Natural killer cell (primary cell): ENCODE measurements at regions of chr19 and their contacts with region 1.

Region 1: GRCh38 chr19:52336117-52336790 is at the start of gene ZNF610:
- DNase-seq: peak; percentile 91 to 92
- ATAC-seq: peak; percentile 95 to 99 (median 98)
- H3K4me3 ChIP-seq: peak within 1 kb of the TSS; percentile 93
- H3K4me3 Mint-ChIP-seq: peak within 1 kb of the TSS; percentile 95
- H3K27ac ChIP-seq: peak within 1 kb of the TSS; percentile 84
- H3K27ac Mint-ChIP-seq: peak within 1 kb of the TSS; percentile 89 to 92
- H3K4me1 ChIP-seq: peaks cover 18% of the 10 kb centered on the region
- H3K4me1 Mint-ChIP-seq: peaks cover 13 to 17% of the 10 kb centered on the region in 2 donors
- H3K27me3 ChIP-seq: no peaks in the 10 kb centered on the region
- H3K27me3 Mint-ChIP-seq: no peaks in the 10 kb centered on the region
- CTCF ChIP-seq: no peak
- total RNA-seq, gene ZNF610: 0.68 to 0.86 (median 0.82) TPM

Region 2: GRCh38 chr19:52171321-52172169 is 164.7 kb before region 1 on chr19 and contains the start of gene ZNF836:
- intact Hi-C with region 1: loop called (anchors 5 kb)
- DNase-seq: peak; percentile 79 to 95
- ATAC-seq: peak; percentile 89 to 93 (median 89)
- H3K4me3 ChIP-seq: peak within 1 kb of the TSS; percentile 83
- H3K4me3 Mint-ChIP-seq: peak within 1 kb of the TSS; percentile 99
- H3K27ac ChIP-seq: peak within 1 kb of the TSS; percentile 80
- H3K27ac Mint-ChIP-seq: peak within 1 kb of the TSS; percentile 87 to 97
- H3K4me1 ChIP-seq: peaks cover 45% of the 10 kb centered on the region
- H3K4me1 Mint-ChIP-seq: peaks cover 42 to 45% of the 10 kb centered on the region in 2 donors
- H3K27me3 ChIP-seq: no peaks in the 10 kb centered on the region
- H3K27me3 Mint-ChIP-seq: no peaks in the 10 kb centered on the region
- CTCF ChIP-seq: no peak
- total RNA-seq, gene ZNF836: 27.9 to 40.2 (median 28.0) TPM

Region 3: DNA sequence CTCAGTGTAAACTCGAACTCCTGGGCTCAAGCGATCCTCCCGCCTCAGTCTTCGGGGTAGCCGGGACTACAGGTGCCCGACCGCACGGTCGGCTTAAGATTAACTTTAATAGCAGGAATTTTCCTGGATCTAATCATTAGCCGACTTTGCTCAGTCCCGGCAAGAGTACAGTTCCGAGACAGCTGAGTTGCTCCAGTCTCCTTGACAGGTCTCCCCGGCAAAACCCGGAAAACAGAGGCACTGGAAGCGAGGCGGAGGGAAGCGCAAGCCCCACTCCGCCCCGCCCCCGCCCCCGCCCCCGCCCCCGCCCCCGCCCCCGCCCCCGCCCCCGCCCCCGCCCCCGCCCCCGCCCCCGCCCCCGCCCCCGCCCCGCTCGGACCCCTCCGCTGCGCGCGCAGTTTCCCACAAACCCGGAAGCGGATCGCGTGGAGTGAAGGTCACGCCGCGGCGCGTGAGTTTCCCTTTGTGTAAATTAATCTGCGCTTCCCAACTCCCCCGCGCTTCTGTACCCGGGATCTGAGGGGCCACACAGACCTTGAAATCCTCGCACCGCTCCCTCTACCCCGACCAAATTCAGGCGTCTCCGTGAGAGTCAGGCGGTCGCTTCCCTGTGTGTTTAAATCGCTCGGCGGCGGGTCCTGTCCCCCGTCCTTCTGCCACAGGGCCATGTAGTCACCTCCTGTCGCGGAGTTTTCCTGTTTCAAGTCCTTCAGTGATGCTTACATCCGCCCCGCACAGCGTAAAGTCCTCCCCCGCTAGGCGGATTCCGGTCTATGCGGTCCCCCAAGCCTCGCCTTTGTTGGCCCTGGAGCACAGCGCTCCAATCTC is 39.3 kb before region 1 on chr19 and contains the start of gene ZNF480:
- intact Hi-C with region 1: loop called (anchors 2 kb)
- DNase-seq: peak; percentile 87 to 95
- ATAC-seq: peak; percentile 87 to 89 (median 87)
- H3K4me3 ChIP-seq: peak within 1 kb of the TSS; percentile 94
- H3K4me3 Mint-ChIP-seq: peak within 1 kb of the TSS; percentile 99
- H3K27ac ChIP-seq: peak within 1 kb of the TSS; percentile 94
- H3K27ac Mint-ChIP-seq: peak within 1 kb of the TSS; percentile 84 to 94
- H3K4me1 ChIP-seq: peaks cover 14% of the 10 kb centered on the region
- H3K4me1 Mint-ChIP-seq: peaks cover 18 to 27% of the 10 kb centered on the region in 2 donors
- H3K27me3 ChIP-seq: no peaks in the 10 kb centered on the region
- H3K27me3 Mint-ChIP-seq: no peaks in the 10 kb centered on the region
- CTCF ChIP-seq: no peak
- total RNA-seq, gene ZNF480: 6.4 to 9.4 (median 7.6) TPM

Region 4: DNA sequence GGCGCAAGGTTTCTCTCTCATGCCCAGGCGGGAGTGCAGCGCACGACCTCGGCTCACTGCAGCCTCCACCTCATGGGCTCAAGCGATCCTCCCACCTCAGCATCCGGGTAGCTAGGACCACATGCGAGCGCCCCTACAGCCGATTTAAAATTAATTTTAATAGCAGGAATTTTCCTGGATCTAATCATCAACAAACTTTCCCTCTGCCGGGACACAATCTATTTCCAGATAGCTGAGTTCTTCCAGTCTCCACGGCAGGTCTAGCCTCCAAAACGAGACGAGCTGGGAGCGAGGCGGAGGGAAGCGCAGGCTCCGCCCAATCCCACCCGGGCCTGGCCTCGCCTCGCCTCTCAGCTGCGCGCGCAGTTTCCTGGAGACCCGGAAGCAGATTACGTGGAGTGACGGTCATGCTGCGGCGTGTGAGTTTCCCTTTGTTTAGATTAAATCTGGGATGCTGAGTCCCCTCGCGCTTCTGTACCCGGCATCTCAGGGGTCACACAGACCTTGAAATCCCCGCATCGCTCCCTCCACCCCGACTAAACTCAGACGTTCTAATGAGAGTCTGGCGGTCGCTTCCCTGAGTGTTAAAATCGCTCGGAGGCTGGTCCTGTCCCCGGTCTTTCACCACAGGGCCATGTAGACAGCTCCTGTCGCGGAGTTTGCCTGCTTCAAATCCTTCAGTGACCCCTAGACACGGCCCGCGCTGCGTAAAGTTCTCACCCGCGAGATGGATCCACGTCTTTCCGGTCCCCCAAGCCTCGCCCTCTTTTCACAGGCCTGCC is 33.5 kb after region 1 on chr19 and contains the start of gene ZNF880:
- intact Hi-C with region 1: loop called (anchors 1 kb)
- DNase-seq: peak; percentile 93
- ATAC-seq: peak; percentile 93 to 96 (median 94)
- H3K4me3 ChIP-seq: peak within 1 kb of the TSS; percentile 89
- H3K4me3 Mint-ChIP-seq: peak within 1 kb of the TSS; percentile 96
- H3K27ac ChIP-seq: peak within 1 kb of the TSS; percentile 99
- H3K27ac Mint-ChIP-seq: peak within 1 kb of the TSS; percentile 97 to 99
- H3K4me1 ChIP-seq: peaks cover 11% of the 10 kb centered on the region
- H3K4me1 Mint-ChIP-seq: peaks cover 12 to 14% of the 10 kb centered on the region in 2 donors
- H3K27me3 ChIP-seq: no peaks in the 10 kb centered on the region
- H3K27me3 Mint-ChIP-seq: no peaks in the 10 kb centered on the region
- CTCF ChIP-seq: no peak
- total RNA-seq, gene ZNF880: 23.1 to 33.2 (median 31.2) TPM